Activated naive CD4-positive, alpha-beta T cell treated with anti-CD3 and anti-CD28 coated beads, Interleukin-2, amount 10 ng/mL, durations not matched to agents 7 days and 5 days (primary cell): ENCODE measurements at regions of chr22 and their contacts with region 1.

Region 1: DNA sequence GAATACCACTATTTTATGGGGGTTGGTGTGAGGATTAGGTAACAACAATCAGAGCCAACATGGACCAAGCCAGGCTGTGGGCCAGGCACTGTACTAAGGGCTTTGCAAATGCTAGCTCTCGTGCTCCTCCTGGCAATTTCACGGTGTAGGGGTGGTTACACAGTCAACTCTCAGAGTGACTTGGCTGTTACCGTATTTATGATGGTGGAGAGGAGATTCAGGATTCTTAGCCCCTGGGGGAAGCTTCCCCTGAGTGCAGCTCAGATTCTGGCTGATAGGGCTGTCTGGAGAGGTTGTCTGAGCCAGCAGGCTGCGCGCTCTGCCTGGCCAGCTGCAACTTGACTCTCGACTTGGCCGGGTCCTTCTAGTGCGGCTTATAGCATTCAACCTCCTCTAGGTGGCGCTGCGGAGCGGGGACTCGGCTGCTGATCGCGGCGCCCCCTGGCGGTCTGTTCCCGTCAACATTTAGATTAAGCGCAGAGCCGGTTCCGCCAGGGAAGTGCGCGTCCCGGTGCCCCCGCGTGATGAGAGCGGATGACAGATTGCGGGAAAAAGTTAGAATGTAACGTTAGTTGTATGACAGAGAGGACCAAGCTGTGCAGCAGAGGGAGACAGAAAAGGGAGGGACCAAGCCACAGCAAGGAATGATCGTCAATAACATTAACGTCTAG is 4.5 kb upstream of the NCF4 start:
- DNase-seq: peak; percentile 93
- H3K4me3 Mint-ChIP-seq: no peak overlapping the region
- H3K27ac Mint-ChIP-seq: no peak overlapping the region
- H3K4me1 Mint-ChIP-seq: peaks cover 42% of the 10 kb centered on the region
- H3K27me3 Mint-ChIP-seq: peaks cover 29% of the 10 kb centered on the region

Region 2: GRCh38 chr22:36546092-36546804 is 310.0 kb before region 1 on chr22:
- CTCF ChIA-PET with region 1: interaction called, 12 read pairs
- DNase-seq: peak; percentile 58
- H3K4me3 Mint-ChIP-seq: no peak overlapping the region
- H3K27ac Mint-ChIP-seq: no peak overlapping the region
- H3K4me1 Mint-ChIP-seq: peaks cover 47% of the 10 kb centered on the region
- H3K27me3 Mint-ChIP-seq: peaks cover 51% of the 10 kb centered on the region

Region 3: DNA sequence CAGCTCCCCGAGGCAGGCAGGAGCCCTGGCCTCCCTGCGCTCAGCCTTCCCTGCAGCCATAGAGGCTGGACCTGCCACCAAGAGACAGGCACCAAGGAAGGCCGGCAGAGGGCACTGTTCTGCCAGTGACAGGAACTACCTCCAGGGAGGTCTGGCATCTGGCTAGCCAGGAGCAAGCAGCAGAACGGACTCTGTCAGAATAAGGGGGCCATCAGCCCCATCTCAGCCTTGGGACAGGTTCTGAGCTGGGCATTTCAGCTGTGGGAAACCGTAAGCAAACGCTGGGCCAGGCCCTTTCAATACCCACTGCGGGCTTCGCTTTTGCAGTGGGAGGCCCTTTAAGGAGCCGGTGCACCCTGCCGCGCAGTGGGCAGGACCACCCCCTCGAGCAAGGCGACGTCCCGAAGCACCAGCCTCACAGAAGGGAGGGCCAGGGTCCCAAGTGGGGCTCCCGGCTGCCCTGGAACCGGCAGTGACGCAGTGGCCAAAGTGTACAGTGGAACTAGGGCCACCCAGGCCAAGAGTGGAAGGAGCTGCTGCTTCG is 98.5 kb before region 1 on chr22:
- CTCF ChIA-PET with region 1: interaction called, 13 read pairs
- DNase-seq: peak; percentile 89
- H3K4me3 Mint-ChIP-seq: no peak overlapping the region
- H3K27ac Mint-ChIP-seq: no peak overlapping the region
- H3K4me1 Mint-ChIP-seq: no peaks in the 10 kb centered on the region
- H3K27me3 Mint-ChIP-seq: peaks cover 26% of the 10 kb centered on the region

Region 4: GRCh38 chr22:36775964-36776669 is 80.1 kb before region 1 on chr22 and contains the start of gene IFT27:
- CTCF ChIA-PET with region 1: interaction called, 211 read pairs
- DNase-seq: peak; percentile 99
- H3K4me3 Mint-ChIP-seq: peak within 1 kb of the TSS; percentile 81
- H3K27ac Mint-ChIP-seq: peak within 1 kb of the TSS; percentile 90
- H3K4me1 Mint-ChIP-seq: peaks cover 26% of the 10 kb centered on the region
- H3K27me3 Mint-ChIP-seq: no peaks in the 10 kb centered on the region

Region 5: GRCh38 chr22:36781656-36782627 is 74.3 kb before region 1 on chr22:
- CTCF ChIA-PET with region 1: interaction called, 211 read pairs
- DNase-seq: peak; percentile 90
- H3K4me3 Mint-ChIP-seq: no peak overlapping the region
- H3K27ac Mint-ChIP-seq: no peak overlapping the region
- H3K4me1 Mint-ChIP-seq: peaks cover 22% of the 10 kb centered on the region
- H3K27me3 Mint-ChIP-seq: peaks cover 45% of the 10 kb centered on the region

Region 6: DNA sequence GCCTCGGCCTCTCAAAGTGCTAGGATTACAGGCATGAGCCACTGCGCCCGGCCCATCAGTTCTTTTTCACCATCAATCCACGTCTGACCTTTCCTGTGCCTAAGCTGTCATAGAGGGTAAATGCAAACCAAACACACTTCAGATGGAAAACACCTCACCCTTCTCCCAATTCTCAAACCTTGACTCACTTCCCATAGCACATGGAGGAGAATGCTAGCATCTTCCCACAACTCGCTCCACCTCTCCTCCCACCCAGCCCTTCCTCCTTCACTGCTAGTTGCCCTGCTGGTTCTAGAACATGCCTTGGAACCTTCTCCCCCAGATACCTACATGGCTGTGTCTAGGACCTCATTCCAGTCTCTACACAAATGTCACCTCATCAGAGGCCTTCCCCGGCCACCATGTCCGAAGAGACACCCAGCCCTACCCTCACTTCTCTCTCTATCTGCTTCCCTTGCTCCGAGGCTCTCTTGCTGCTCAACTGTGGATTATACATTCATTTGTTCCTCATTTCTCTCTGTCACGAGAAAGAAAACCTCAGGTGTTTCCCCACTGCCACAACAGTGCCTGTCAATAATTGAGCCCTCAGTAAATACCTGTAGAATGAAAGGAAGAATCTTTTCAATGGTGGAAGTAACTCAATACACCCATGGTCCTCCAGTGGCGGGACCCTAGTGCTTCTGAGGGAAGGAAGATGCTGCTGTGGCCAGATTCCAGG is 16.7 kb before region 1 on chr22:
- CTCF ChIA-PET with region 1: interaction called, 13 read pairs
- DNase-seq: no peak
- H3K4me3 Mint-ChIP-seq: no peak overlapping the region
- H3K27ac Mint-ChIP-seq: no peak overlapping the region
- H3K4me1 Mint-ChIP-seq: no peaks in the 10 kb centered on the region
- H3K27me3 Mint-ChIP-seq: peaks cover 38% of the 10 kb centered on the region

Region 7: DNA sequence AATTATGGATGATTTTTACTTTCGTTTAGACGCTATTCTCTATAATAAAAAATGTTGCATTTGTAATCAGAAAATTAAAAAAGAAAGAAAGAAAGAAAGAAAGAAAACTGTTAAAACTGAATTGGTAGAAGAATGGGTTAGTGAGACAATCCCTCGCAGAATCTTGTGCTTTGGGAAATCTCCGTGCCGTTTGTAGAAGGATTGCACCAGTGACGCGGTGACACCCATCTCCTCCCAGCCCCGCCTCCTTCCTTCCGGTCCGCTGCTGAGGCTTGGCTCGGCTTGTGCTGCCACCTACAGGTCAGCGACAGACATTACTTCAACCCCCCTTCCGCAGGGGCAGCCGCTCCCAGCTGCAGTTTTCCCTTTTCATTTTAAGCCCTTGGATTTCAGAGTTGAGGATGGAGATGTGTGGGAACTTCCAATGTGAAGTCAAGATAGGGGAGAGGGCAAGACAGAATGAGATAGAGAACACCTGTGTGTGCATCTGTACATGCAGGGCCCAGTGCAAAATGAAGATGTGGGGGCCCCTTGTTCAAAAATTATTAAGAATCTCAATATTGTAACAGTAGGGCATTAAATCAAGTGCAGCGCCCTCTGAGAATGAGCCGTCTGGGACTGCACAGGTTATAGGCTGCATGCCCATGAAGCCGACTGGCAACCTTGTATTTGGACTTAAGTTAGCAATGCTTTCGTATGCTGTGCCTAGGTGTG is 121.8 kb after region 1 on chr22:
- CTCF ChIA-PET with region 1: interaction called, 72 read pairs
- DNase-seq: peak; percentile 93
- H3K4me3 Mint-ChIP-seq: peak overlapping the region; percentile 79
- H3K27ac Mint-ChIP-seq: peak overlapping the region; percentile 74
- H3K4me1 Mint-ChIP-seq: peaks cover 14% of the 10 kb centered on the region
- H3K27me3 Mint-ChIP-seq: peaks cover 46% of the 10 kb centered on the region